Endothelial cell of umbilical vein (primary cell): ENCODE measurements at regions of chr3 and their contacts with region 1.

Region 1: DNA sequence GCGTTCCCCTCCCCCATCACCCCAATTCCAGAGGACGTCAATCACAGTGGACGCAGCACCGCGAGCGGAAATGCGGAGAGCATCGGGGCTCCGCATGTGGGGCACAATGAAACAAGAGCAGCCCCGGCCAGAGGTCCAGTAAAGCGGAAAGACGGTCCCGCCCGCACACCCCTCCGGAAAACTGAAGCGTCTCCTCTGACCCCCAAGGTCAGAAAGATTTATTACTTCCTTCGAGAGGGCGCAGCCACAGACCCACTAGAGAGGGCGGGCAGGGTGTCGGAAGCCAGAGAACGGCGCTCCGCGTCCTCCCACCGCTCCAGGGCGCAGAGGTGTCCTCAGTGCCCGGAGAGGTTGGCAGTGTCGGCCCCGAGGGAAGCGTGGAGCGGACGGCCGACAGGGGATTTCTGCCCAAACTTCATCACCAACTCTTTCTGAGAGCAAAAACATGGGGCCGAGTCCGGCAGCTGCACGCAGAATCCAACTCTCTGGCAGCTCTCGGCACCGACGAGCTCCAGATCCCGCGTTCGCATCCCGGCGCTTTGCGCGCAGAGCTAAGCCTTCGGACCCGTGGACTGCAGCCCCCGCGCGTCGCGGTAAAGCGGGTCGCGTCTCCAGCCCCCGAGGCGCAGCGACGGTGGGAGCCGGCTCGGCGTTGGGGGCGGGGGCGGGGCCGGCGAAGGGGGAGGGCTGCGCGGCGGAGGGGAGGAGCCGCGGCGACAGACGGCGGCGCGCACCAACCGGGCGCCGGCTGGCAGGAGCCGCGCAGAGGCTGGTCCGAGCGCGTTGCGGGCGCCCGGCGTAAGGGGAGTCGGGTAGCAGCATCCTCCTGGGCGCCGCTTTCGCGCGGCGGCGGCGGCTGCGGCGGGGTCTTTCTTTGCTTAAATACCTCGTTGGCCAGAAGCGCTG is at the start of gene CHST2:
- DNase-seq: peak; percentile 73
- H3K4me3 ChIP-seq: peak within 1 kb of the TSS; percentile 48 to 94 (median 84)
- H3K27ac ChIP-seq: peak within 1 kb of the TSS; percentile 16
- H3K4me1 ChIP-seq: peaks cover 5% of the 10 kb centered on the region
- H3K27me3 ChIP-seq: peaks cover 0 to under 1% of the 10 kb centered on the region in 2 experiments
- CTCF ChIP-seq: no peak
- POLR2A ChIP-seq: peak; percentile 67
- total RNA-seq, gene CHST2: 2.5 and 6.5 TPM in 2 replicates

Region 2: DNA sequence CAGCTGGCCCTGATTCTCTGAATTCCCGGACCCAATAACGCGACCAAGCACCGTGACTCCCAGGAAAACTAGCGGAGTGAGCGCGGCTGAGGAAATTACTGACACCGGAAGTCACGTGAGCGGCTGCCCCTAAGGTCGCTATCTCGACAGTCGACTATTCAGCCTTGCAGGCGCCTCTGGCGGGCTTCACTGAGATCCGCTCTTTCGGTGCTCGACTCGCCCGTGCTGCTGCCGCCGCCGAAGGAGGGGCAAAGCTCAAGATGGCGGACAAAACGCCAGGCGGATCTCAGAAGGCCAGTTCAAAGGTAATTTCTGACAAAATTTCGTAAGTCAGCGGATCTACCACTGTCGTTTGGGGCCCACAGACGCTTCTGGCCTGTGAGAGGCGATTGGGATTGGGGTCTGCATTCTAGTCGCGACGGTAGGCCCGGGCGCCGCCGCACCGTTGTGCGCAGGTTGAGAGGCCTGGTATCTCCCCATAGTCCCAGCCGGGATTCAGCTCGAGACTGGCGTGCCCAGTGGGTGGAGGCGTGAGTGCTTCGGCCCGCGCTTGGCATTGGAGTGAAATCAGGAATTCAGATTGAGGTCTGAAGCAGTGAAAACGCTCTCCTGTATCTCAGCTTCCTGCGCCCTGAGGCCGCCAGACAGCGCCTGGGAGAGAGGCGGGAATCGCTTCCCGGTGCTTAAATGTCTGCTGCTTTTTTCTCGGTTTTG is 117.7 kb before region 1 on chr3 and contains the start of gene U2SURP:
- CTCF ChIA-PET with region 1: no interaction called
- POLR2A ChIA-PET with region 1: no interaction called
- dilution Hi-C with region 1: no loop called
- intact Hi-C with region 1: loop called (anchors 5 kb)
- DNase-seq: peak; percentile 98
- H3K4me3 ChIP-seq: peak within 1 kb of the TSS; percentile 73 to 93 (median 92)
- H3K27ac ChIP-seq: peak within 1 kb of the TSS; percentile 72
- H3K4me1 ChIP-seq: peaks cover 16% of the 10 kb centered on the region
- H3K27me3 ChIP-seq: peaks cover 0 to 2% of the 10 kb centered on the region in 2 experiments
- CTCF ChIP-seq: no peak
- POLR2A ChIP-seq: peak; percentile 84
- total RNA-seq, gene U2SURP: 85.2 and 92.4 TPM in 2 replicates

Region 3: GRCh38 chr3:143302638-143303171 is 183.4 kb after region 1 on chr3:
- CTCF ChIA-PET with region 1: interaction called, 3 read pairs
- POLR2A ChIA-PET with region 1: no interaction called
- dilution Hi-C with region 1: no loop called
- intact Hi-C with region 1: loop called (anchors 5 kb)
- DNase-seq: peak; percentile 90
- H3K4me3 ChIP-seq: no peak overlapping the region
- H3K27ac ChIP-seq: peak overlapping the region; percentile 71
- H3K4me1 ChIP-seq: peaks cover 48% of the 10 kb centered on the region
- H3K27me3 ChIP-seq: no peaks in the 10 kb centered on the region
- CTCF ChIP-seq: no peak
- POLR2A ChIP-seq: peak; percentile 71

Region 4: DNA sequence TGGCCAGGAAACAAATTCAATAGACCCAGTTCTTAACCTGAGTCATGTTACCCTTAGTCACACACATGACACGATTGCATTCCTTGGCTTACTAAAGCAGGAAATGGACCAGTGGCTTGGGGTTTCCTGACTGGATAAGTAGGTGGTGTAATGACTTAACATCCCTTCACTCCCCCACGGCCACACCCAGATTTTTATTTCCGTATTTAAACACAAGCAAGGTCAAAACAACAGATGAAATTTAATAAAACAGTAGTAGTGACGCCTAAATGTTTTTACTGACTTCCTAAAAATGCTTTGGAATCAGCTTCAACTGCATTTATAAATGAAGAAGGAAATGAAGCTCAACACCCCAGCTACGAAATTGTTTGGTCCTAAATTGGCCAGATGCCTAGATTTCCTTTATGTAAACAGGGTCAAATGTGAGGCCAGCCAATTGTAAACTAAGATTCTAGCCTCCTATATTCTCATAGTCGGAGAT is 324.6 kb after region 1 on chr3:
- CTCF ChIA-PET with region 1: interaction called, 3 read pairs
- POLR2A ChIA-PET with region 1: no interaction called
- dilution Hi-C with region 1: no loop called
- intact Hi-C with region 1: loop called (anchors 1 kb)
- DNase-seq: peak; percentile 98
- H3K4me3 ChIP-seq: no peak overlapping the region
- H3K27ac ChIP-seq: peak overlapping the region; percentile 98
- H3K4me1 ChIP-seq: peaks cover 25% of the 10 kb centered on the region
- H3K27me3 ChIP-seq: no peaks in the 10 kb centered on the region
- CTCF ChIP-seq: no peak
- POLR2A ChIP-seq: peak; percentile 62

Region 5: GRCh38 chr3:143644370-143645089 is 525.3 kb after region 1 on chr3:
- CTCF ChIA-PET with region 1: interaction called, 31 read pairs
- POLR2A ChIA-PET with region 1: no interaction called
- dilution Hi-C with region 1: no loop called
- intact Hi-C with region 1: loop called (anchors 1 kb)
- DNase-seq: peak; percentile 87
- H3K4me3 ChIP-seq: no peak overlapping the region
- H3K27ac ChIP-seq: no peak overlapping the region
- H3K4me1 ChIP-seq: peaks cover 11% of the 10 kb centered on the region
- H3K27me3 ChIP-seq: no peaks in the 10 kb centered on the region
- CTCF ChIP-seq: peak; percentile 55 to 60
- POLR2A ChIP-seq: no peak